ENCODE measurements at regions of chr17 and their contacts with region 1.

Region 1: GRCh38 chr17:19306160-19307111 is 56.1 kb downstream of the B9D1 start:
- DNase-seq: peak; percentile 38
- ATAC-seq: peak; percentile 82
- H3K4me3 Mint-ChIP-seq: peak overlapping the region; percentile 68
- H3K27ac Mint-ChIP-seq: peak overlapping the region; percentile 69
- H3K4me1 Mint-ChIP-seq: peaks cover 77% of the 10 kb centered on the region
- H3K27me3 Mint-ChIP-seq: no peaks in the 10 kb centered on the region
- CTCF ChIP-seq: no peak

Region 2: GRCh38 chr17:17836250-17836817 is 1470.1 kb before region 1 on chr17:
- CTCF ChIA-PET with region 1: no interaction called
- POLR2A ChIA-PET with region 1: no interaction called
- intact Hi-C with region 1: loop called (anchors 5 kb)
- DNase-seq: peak; percentile 93
- ATAC-seq: peak; percentile 59
- H3K4me3 Mint-ChIP-seq: peak overlapping the region; percentile 86
- H3K27ac Mint-ChIP-seq: peak overlapping the region; percentile 66
- H3K4me1 Mint-ChIP-seq: peaks cover 70% of the 10 kb centered on the region
- H3K27me3 Mint-ChIP-seq: no peaks in the 10 kb centered on the region
- CTCF ChIP-seq: no peak

Region 3: DNA sequence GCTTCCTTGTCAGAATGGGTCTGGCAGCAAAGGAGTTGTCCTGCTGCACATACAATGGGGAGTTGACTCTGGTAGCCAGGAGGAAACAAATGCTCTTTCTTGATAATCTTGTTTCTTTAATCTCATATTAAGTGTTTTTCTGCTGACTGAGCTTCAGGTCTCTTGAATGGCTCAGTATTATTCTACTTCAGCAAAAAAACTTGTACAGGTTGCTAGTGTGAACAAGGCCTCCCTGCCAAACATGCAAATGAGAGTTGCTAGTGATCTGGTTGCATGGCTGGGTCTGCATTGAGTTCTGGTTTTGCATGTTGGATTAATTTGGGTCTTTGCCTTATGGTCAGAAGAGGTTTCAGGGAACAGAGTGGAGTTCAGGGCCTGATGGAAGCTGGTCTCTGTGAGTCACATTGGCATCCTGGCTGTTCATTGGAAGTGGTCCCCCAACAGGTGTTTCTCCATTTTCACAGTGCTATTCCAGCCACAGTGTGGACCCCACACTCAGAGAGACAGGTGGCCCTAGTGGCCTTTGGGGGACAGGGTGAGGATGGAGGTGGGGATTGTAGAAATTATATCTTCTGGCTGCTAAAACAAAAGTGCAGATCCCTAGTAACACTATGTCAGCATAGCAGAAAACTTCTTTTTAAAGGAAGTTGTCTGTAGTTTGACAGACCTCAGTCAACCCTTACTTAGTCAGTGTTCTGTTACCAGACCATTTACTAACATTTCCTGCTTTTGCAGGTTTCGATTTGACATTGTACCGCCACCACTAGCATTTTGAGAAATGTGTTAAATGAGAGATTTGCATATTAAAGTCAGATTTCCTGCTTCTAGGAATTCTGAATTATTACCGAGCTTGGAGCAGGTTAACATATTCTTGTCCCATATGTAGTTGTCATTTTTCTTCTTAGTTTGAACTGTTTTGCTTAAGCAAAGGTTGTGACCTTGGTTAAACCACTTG is 22.2 kb before region 1 on chr17:
- CTCF ChIA-PET with region 1: interaction called, 5 read pairs
- POLR2A ChIA-PET with region 1: interaction called, 14 read pairs
- intact Hi-C with region 1: loop called (anchors 1 kb)
- DNase-seq: no peak
- ATAC-seq: peak; percentile 83
- H3K4me3 Mint-ChIP-seq: peak overlapping the region; percentile 39
- H3K27ac Mint-ChIP-seq: peak overlapping the region; percentile 37
- H3K4me1 Mint-ChIP-seq: peaks cover 27% of the 10 kb centered on the region
- H3K27me3 Mint-ChIP-seq: peaks cover 14% of the 10 kb centered on the region
- CTCF ChIP-seq: no peak

Region 4: DNA sequence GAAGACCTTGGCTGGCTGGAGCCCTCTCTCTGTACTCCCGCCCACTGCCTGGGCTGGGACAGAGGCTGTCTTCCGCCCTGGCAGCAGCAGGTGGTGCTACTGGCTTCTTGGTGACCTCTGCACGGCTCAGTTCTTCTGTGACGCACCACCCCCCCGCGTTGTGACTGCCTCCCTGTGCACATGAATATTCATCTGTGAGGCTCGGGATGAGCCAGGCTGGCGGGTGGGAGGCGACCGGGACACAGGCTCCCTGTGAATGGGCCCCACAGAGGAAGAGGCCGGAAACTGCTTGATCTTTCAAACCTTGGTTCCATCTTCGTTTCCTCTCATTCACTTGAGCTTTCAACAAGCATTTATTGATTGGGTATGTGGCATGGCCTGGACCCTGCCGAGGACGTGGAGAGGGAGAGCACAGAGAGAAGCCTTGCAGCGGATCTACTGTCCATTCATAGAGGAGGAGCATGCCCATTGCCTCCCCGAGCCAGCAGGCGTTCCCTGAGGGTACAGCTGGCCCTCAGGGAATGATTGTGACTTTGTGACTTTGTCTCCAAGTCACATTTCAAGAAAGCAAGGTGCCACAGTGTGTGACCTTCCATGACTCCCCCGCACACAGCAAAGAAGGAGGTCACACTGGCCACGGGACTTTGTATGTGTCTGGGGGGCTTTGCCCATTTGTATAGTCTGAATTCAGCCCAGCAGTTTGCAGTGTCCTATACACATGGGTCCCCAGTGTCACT is 11.1 kb after region 1 on chr17:
- CTCF ChIA-PET with region 1: interaction called, 4 read pairs
- POLR2A ChIA-PET with region 1: interaction called, 4 read pairs
- intact Hi-C with region 1: loop called (anchors 2 kb)
- DNase-seq: no peak
- ATAC-seq: peak; percentile 96
- H3K4me3 Mint-ChIP-seq: no peak overlapping the region
- H3K27ac Mint-ChIP-seq: no peak overlapping the region
- H3K4me1 Mint-ChIP-seq: peaks cover 6% of the 10 kb centered on the region
- H3K27me3 Mint-ChIP-seq: peaks cover 2% of the 10 kb centered on the region
- CTCF ChIP-seq: no peak

Region 5: GRCh38 chr17:19377602-19378392 is 71.4 kb after region 1 on chr17:
- CTCF ChIA-PET with region 1: interaction called, 3 read pairs
- POLR2A ChIA-PET with region 1: interaction called, 9 read pairs
- intact Hi-C with region 1: loop called (anchors 5 kb)
- DNase-seq: peak; percentile 93
- ATAC-seq: peak; percentile 95
- H3K4me3 Mint-ChIP-seq: peak overlapping the region; percentile 100
- H3K27ac Mint-ChIP-seq: peak overlapping the region; percentile 99
- H3K4me1 Mint-ChIP-seq: peaks cover 31% of the 10 kb centered on the region
- H3K27me3 Mint-ChIP-seq: no peaks in the 10 kb centered on the region
- CTCF ChIP-seq: no peak

Region 6: GRCh38 chr17:19507775-19508576 is 201.5 kb after region 1 on chr17:
- CTCF ChIA-PET with region 1: no interaction called
- POLR2A ChIA-PET with region 1: no interaction called
- intact Hi-C with region 1: loop called (anchors 5 kb)
- DNase-seq: peak; percentile 83
- ATAC-seq: peak; percentile 80
- H3K4me3 Mint-ChIP-seq: peak overlapping the region; percentile 92
- H3K27ac Mint-ChIP-seq: peak overlapping the region; percentile 94
- H3K4me1 Mint-ChIP-seq: peaks cover 11% of the 10 kb centered on the region
- H3K27me3 Mint-ChIP-seq: peaks cover 2% of the 10 kb centered on the region
- CTCF ChIP-seq: no peak

Measured in activated B cell treated with CpG ODN at 0.5 μM for 24 hours (primary cell).